Posterior vena cava (tissue), 2 donors: ENCODE measurements at regions of chr6 and their contacts with region 1.

Region 1: GRCh38 chr6:88870717-88871330 is 92.6 kb downstream of the RNGTT start:
- DNase-seq: no peak

Region 2: DNA sequence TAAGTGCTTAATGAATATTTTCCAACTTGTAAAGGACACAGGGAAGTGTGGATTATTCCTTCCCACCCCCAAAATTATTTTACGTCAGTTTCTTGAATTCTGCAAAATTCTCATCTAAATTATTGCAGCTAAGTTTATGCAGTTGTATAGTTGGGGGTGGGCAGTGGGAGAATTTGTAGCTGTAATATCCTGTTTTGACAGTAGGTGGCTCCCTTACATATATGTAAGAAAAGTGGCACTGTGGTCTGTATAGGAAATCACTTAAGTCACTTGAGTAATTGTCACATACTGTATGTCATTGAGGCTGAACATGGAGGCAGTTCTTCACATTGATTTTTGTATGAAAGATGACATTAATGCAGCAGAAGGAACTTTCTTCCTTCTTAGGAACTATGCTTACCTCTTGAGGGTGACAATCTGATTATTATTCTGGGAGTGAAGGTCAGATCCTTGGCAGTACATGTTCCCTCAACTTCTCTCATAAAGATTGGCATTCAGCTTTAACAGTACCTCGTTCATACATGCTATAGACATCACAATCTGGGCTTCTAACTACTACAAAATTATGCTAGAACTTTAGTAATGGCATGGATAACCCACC is 1477.7 kb before region 1 on chr6:
- intact Hi-C with region 1: loop called in 1 of 2 experiments (anchors 10 kb)
- DNase-seq: no peak

Region 3: GRCh38 chr6:88848870-88849269 is 22.0 kb before region 1 on chr6:
- intact Hi-C with region 1: no loop called
- DNase-seq: no peak